ENCODE measurements at regions of chr2 and their contacts with region 1.

Region 1: DNA sequence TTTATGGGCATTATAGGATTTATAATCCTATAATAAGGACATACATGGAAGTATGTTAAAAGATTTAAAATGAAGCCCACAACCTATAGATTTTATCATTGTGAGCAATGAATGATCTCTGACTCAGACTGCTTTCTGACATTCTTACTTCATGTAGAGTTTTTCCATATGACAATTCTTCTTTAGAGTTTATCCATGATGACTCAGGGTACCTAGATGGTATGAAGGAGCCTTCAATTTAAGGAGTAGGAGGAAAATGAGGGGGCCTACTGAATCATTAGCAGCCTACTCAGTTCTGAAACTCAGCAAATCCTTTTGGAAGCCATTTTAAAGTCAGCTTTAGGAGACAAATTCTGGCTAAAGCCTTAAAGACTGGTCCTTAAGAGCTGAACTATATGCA is 10.4 kb downstream of the PELI1 start:
- DNase-seq: no peak
- ATAC-seq: no peak
- H3K4me3 Mint-ChIP-seq: no peak overlapping the region
- H3K27ac Mint-ChIP-seq: no peak overlapping the region
- H3K4me1 Mint-ChIP-seq: peaks cover 63% of the 10 kb centered on the region
- H3K27me3 Mint-ChIP-seq: no peaks in the 10 kb centered on the region
- CTCF ChIP-seq: no peak

Region 2: DNA sequence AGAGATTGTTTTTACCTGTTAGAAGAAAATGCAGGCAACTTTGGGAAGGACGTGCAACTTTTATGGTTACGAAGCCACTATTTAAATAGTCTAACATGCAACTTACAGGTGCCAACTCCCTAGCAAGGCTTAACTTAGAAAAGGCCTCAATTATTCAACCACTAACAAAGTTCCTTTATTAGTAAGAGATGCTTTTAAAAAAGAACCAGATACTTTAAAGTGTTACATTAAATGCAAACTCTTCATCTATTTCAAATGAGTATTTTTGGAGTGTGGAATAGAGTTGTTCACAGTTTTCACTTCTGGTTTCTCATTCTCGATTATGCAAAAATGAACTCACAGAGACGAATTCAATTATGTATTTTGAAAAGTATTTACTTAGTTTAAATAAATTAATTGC is 41.3 kb before region 1 on chr2:
- CTCF ChIA-PET with region 1: no interaction called
- POLR2A ChIA-PET with region 1: interaction called, 4 read pairs
- intact Hi-C with region 1: loop called (anchors 2 kb)
- DNase-seq: no peak
- ATAC-seq: peak; percentile 31
- H3K4me3 Mint-ChIP-seq: peak overlapping the region; percentile 52
- H3K27ac Mint-ChIP-seq: peak overlapping the region; percentile 91
- H3K4me1 Mint-ChIP-seq: peaks cover 66% of the 10 kb centered on the region
- H3K27me3 Mint-ChIP-seq: no peaks in the 10 kb centered on the region
- CTCF ChIP-seq: no peak

Region 3: DNA sequence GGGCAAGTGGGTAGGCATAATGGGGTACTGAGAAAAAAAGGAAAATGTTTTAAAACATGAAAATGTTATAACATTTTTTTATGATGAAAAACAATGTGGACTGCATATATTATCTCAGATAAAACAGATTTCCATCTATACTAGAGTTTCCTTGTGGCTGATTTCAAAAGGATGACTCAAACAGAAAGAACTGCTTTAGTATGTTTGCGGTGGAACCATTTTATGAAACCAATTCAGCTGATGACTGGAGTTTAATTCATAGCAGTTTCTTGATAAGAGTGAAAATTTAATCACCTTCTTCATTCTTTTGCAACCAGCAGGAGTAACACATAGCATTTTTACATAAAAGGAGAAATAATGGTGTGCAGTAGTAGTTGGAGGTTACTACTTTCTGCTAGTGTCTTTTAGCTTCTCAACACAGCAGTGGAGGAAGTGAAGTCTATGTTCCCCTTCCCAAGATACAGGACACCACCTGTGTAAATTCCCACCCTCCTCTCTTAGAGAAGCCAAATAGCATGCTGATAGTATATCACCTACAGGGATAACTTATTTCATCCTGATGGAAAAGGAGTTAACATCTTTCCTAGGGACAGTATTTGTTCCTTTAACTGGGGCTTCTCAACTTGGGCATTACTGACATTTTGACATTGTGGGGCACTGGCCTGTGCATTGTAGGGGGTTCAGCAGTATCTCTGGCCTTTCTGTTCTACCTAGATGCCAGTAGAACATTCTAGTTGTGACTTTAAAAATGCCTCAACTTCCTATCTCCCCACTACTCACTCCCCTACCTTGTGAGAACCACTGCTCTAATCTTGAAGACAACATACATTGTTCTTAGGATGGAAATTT is 19.5 kb before region 1 on chr2:
- CTCF ChIA-PET with region 1: no interaction called
- POLR2A ChIA-PET with region 1: no interaction called
- intact Hi-C with region 1: loop called (anchors 2 kb)
- DNase-seq: no peak
- ATAC-seq: peak; percentile 54
- H3K4me3 Mint-ChIP-seq: peak overlapping the region; percentile 52
- H3K27ac Mint-ChIP-seq: peak overlapping the region; percentile 79
- H3K4me1 Mint-ChIP-seq: peaks cover 60% of the 10 kb centered on the region
- H3K27me3 Mint-ChIP-seq: no peaks in the 10 kb centered on the region
- CTCF ChIP-seq: no peak

Region 4: GRCh38 chr2:64122358-64122757 is 11.5 kb before region 1 on chr2:
- CTCF ChIA-PET with region 1: no interaction called
- POLR2A ChIA-PET with region 1: interaction called, 3 read pairs
- intact Hi-C with region 1: loop called (anchors 1 kb)
- DNase-seq: no peak
- ATAC-seq: peak; percentile 60
- H3K4me3 Mint-ChIP-seq: peak overlapping the region; percentile 56
- H3K27ac Mint-ChIP-seq: peak overlapping the region; percentile 50
- H3K4me1 Mint-ChIP-seq: peaks cover 47% of the 10 kb centered on the region
- H3K27me3 Mint-ChIP-seq: no peaks in the 10 kb centered on the region
- CTCF ChIP-seq: no peak

Measured in activated B cell treated with CpG ODN at 0.5 μM for 24 hours (primary cell).